Caco-2 (cell line): ENCODE measurements at regions of chr4 and their contacts with region 1.

Region 1: DNA sequence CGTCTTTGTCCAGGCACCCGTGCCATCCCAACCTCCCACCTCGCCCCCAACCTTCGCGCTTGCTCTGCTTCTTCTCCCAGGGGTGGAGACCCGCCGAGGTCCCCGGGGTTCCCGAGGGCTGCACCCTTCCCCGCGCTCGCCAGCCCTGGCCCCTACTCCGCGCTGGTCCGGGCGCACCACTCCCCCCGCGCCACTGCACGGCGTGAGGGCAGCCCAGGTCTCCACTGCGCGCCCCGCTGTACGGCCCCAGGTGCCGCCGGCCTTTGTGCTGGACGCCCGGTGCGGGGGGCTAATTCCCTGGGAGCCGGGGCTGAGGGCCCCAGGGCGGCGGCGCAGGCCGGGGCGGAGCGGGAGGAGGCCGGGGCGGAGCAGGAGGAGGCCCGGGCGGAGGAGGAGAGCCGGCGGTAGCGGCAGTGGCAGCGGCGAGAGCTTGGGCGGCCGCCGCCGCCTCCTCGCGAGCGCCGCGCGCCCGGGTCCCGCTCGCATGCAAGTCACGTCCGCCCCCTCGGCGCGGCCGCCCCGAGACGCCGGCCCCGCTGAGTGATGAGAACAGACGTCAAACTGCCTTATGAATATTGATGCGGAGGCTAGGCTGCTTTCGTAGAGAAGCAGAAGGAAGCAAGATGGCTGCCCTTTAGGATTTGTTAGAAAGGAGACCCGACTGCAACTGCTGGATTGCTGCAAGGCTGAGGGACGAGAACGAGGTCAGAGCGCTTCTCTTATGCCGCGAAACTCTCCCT is at the start of gene TET2:
- DNase-seq: peak; percentile 75 to 76
- H3K4me3 ChIP-seq: peak within 1 kb of the TSS; percentile 57
- H3K4me3 Mint-ChIP-seq: peak within 1 kb of the TSS; percentile 94
- H3K27ac Mint-ChIP-seq: peak within 1 kb of the TSS; percentile 97
- H3K4me1 ChIP-seq: no peaks in the 10 kb centered on the region; the same call in 1 of the 2 replicates
- H3K4me1 Mint-ChIP-seq: no peaks in the 10 kb centered on the region
- H3K27me3 ChIP-seq: no peaks in the 10 kb centered on the region
- H3K27me3 Mint-ChIP-seq: no peaks in the 10 kb centered on the region
- CTCF ChIP-seq: no peak
- total RNA-seq, gene TET2: 14.8 and 17.7 TPM in 2 replicates

Region 2: DNA sequence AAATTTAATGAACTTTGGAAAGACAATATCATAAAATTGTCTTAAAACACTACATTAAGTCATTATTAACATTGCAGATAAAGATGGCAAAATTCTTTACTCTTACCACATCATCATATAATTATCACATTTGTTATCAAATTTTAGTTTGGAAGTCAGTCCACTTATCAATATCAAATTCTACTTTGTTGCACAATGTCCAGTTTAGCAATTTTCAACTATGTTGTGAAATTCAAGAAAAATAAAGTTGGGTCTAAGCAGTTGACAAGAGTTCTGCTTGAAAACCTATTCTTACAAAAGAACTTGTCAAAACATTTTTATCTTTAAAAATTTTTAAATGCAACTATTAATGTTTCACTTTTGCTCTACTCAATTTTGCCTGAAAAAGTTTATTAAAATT is 44.4 kb before region 1 on chr4:
- CTCF ChIA-PET with region 1: no interaction called
- POLR2A ChIA-PET with region 1: no interaction called
- intact Hi-C with region 1: no loop called
- DNase-seq: no peak
- H3K4me3 ChIP-seq: no peak overlapping the region
- H3K4me3 Mint-ChIP-seq: no peak overlapping the region
- H3K27ac Mint-ChIP-seq: no peak overlapping the region
- H3K4me1 ChIP-seq: no peaks in the 10 kb centered on the region
- H3K4me1 Mint-ChIP-seq: no peaks in the 10 kb centered on the region
- H3K27me3 ChIP-seq: no peaks in the 10 kb centered on the region
- H3K27me3 Mint-ChIP-seq: peaks cover 6% of the 10 kb centered on the region
- CTCF ChIP-seq: no peak

Region 3: DNA sequence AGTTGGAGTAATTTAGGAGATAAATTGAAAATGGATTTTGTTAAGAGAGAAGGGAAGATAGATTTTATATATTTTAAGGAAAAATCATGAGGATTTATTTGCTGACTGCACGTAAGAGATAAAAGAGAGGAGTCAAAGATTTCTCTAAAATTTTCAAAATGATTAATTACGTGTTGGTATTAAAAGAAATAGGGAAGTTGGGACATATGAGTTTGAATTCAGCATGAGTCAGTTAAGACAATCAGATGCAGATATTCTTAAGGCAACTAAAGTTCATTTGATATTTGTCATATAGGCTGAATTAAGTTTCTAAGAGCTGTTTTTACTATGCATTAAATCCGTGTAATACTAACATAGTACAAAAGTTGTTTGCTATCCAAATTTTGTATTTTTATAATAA is 47.1 kb after region 1 on chr4:
- CTCF ChIA-PET with region 1: no interaction called
- POLR2A ChIA-PET with region 1: no interaction called
- intact Hi-C with region 1: loop called (anchors 1 kb)
- DNase-seq: no peak
- H3K4me3 ChIP-seq: no peak overlapping the region
- H3K4me3 Mint-ChIP-seq: no peak overlapping the region
- H3K27ac Mint-ChIP-seq: no peak overlapping the region
- H3K4me1 ChIP-seq: peaks cover 12% of the 10 kb centered on the region
- H3K4me1 Mint-ChIP-seq: peaks cover 11% of the 10 kb centered on the region
- H3K27me3 ChIP-seq: no peaks in the 10 kb centered on the region
- H3K27me3 Mint-ChIP-seq: no peaks in the 10 kb centered on the region
- CTCF ChIP-seq: no peak

Region 4: DNA sequence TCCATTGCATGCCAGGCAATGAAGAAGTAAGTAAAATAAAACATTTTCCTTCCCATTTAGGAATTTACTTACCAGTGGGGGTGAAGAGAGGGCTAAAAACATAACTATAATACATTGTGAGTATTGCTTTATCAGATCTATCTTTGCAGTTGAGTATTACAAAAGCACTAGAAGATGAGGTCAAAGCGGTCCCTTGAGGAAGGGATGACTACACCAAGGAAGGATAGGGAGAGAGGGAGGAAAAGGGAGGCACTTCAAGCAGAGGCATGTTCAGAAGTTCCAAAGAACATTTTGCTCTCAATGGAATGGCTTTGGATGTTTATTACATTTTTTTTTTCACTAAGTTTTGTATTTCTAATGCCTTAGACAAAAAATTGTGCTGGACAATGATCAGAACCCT is 128.1 kb after region 1 on chr4:
- CTCF ChIA-PET with region 1: no interaction called
- POLR2A ChIA-PET with region 1: no interaction called
- intact Hi-C with region 1: no loop called
- DNase-seq: no peak
- H3K4me3 ChIP-seq: no peak overlapping the region
- H3K4me3 Mint-ChIP-seq: no peak overlapping the region
- H3K27ac Mint-ChIP-seq: no peak overlapping the region
- H3K4me1 ChIP-seq: no peaks in the 10 kb centered on the region
- H3K4me1 Mint-ChIP-seq: no peaks in the 10 kb centered on the region
- H3K27me3 ChIP-seq: no peaks in the 10 kb centered on the region
- H3K27me3 Mint-ChIP-seq: no peaks in the 10 kb centered on the region
- CTCF ChIP-seq: no peak